CD8-positive, alpha-beta T cell (primary cell): ENCODE measurements at regions of chr4 and their contacts with region 1.

Region 1: GRCh38 chr4:7939377-7940108 is at the start of gene AFAP1:
- DNase-seq: peak; percentile 75 to 94 (median 87)
- ATAC-seq: peak; percentile 90
- H3K4me3 ChIP-seq: peak within 1 kb of the TSS; percentile 63 to 70
- H3K4me3 Mint-ChIP-seq: peak within 1 kb of the TSS; percentile 75
- H3K27ac ChIP-seq: peak within 1 kb of the TSS in 1 of 2 experiments; percentile 62
- H3K27ac Mint-ChIP-seq: no peak within 1 kb of the TSS
- H3K4me1 ChIP-seq: peaks cover 9% of the 10 kb centered on the region
- H3K4me1 Mint-ChIP-seq: peaks cover 26% of the 10 kb centered on the region
- H3K27me3 ChIP-seq: peaks cover 0 to 5% of the 10 kb centered on the region in 2 experiments
- H3K27me3 Mint-ChIP-seq: no peaks in the 10 kb centered on the region
- CTCF ChIP-seq: no peak
- total RNA-seq, gene AFAP1: 13.4 to 13.9 TPM

Region 2: GRCh38 chr4:7761720-7762119 is 177.8 kb before region 1 on chr4:
- CTCF ChIA-PET with region 1: interaction called, 3 read pairs
- POLR2A ChIA-PET with region 1: interaction called, 3 read pairs
- intact Hi-C with region 1: loop called in 1 of 2 experiments (anchors 2 kb)
- DNase-seq: peak; percentile 24 to 73 (median 55)
- ATAC-seq: peak; percentile 64
- H3K4me3 ChIP-seq: no peak overlapping the region
- H3K4me3 Mint-ChIP-seq: peak overlapping the region; percentile 8
- H3K27ac ChIP-seq: peak overlapping the region in 1 of 2 experiments; percentile 31
- H3K27ac Mint-ChIP-seq: peak overlapping the region; percentile 84
- H3K4me1 ChIP-seq: peaks cover 35% of the 10 kb centered on the region
- H3K4me1 Mint-ChIP-seq: peaks cover 32% of the 10 kb centered on the region
- H3K27me3 ChIP-seq: no peaks in the 10 kb centered on the region
- H3K27me3 Mint-ChIP-seq: no peaks in the 10 kb centered on the region
- CTCF ChIP-seq: peak; percentile 51

Region 3: DNA sequence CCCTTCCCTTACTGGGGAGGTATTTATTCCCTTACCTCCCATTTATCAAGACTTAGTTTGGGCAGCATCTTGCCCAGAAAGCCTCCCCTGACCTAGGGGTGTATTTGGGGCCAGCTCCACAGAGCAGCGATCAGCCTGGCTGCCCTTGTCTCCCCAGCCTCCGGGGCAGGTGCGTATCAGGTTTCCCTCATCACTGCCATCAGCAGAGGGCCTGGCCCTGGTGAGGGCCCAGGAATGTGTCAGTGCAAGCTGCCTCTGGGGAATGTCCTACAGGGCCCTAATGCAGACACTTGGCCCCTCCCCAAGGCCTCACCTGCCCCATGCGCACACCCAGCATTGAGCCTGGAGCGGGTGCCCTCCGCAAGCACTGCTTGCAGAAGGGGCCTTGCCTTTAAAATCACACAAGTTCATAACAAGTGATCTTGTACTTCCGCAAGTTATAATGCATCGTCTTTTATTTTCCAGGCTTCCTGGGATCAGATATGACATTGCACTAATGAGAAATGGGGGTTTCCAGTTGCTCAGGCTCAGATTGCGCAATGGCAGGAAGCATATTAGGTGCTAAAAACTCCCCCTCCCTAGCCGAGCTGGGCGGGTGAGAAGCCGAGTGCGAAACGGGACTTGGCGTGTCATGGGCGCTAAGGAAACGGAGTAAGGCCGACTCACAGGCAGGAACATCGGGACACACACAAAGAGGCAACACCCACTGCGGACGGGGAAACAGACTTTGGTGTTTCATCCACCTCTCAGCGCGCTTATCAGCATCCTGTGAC is 25.5 kb after region 1 on chr4:
- CTCF ChIA-PET with region 1: no interaction called
- POLR2A ChIA-PET with region 1: no interaction called
- intact Hi-C with region 1: loop called (anchors 1 to 5 kb)
- DNase-seq: peak in 5 of 9 experiments; percentile 26 to 93 (median 52)
- ATAC-seq: peak; percentile 41
- H3K4me3 ChIP-seq: no peak overlapping the region
- H3K4me3 Mint-ChIP-seq: no peak overlapping the region
- H3K27ac ChIP-seq: peak overlapping the region; percentile 37 to 95
- H3K27ac Mint-ChIP-seq: peak overlapping the region; percentile 82
- H3K4me1 ChIP-seq: peaks cover 44% of the 10 kb centered on the region
- H3K4me1 Mint-ChIP-seq: peaks cover 36% of the 10 kb centered on the region
- H3K27me3 ChIP-seq: no peaks in the 10 kb centered on the region
- H3K27me3 Mint-ChIP-seq: peaks cover 2% of the 10 kb centered on the region
- CTCF ChIP-seq: no peak

Region 4: DNA sequence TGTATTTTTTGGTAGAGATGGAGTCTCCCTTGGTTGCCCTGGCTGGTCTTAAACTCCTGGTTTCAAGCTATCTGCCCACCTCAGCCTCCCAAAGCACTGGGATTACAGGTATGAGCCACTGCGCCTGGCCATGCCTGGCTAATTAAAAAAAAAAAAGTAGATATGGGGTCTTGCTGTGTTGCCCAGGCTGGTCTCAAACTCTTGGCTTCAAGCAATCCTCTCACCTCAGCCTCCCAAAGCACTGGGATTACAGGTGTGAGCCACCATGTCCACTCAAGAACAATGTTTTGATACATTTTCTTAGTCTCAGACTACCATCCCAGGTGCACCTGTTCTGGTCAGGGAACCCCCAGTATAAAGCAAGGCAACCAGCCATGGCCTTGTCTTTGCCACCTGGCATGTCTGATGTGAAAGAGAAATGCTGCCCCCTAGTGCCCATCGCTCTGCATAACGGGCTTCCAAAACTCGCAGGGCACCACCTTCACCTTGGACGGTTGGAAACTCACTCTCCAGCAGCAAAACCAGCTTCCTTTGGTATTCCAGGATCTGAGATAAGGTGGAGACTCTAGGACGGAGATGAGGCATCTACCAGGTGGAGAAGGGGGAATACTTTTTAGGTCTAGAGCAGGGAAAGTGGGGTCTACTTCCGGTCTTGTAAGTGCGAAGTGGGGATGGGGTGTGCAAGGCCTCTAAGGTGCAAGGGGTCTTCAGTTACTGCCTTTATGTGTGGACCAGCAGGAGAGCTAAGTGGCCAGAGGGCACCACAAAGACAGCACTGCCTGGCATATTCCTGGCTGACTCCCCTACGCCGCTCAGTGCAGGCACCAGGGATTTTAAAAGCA is 47.8 kb after region 1 on chr4:
- CTCF ChIA-PET with region 1: interaction called, 8 read pairs
- POLR2A ChIA-PET with region 1: interaction called, 3 read pairs
- intact Hi-C with region 1: loop called (anchors 1 to 5 kb)
- DNase-seq: peak; percentile 56 to 84 (median 76)
- ATAC-seq: peak; percentile 77
- H3K4me3 ChIP-seq: no peak overlapping the region
- H3K4me3 Mint-ChIP-seq: no peak overlapping the region
- H3K27ac ChIP-seq: no peak overlapping the region
- H3K27ac Mint-ChIP-seq: no peak overlapping the region
- H3K4me1 ChIP-seq: peaks cover 5% of the 10 kb centered on the region
- H3K4me1 Mint-ChIP-seq: peaks cover 6% of the 10 kb centered on the region
- H3K27me3 ChIP-seq: no peaks in the 10 kb centered on the region
- H3K27me3 Mint-ChIP-seq: peaks cover 2% of the 10 kb centered on the region
- CTCF ChIP-seq: peak; percentile 76

Region 5: DNA sequence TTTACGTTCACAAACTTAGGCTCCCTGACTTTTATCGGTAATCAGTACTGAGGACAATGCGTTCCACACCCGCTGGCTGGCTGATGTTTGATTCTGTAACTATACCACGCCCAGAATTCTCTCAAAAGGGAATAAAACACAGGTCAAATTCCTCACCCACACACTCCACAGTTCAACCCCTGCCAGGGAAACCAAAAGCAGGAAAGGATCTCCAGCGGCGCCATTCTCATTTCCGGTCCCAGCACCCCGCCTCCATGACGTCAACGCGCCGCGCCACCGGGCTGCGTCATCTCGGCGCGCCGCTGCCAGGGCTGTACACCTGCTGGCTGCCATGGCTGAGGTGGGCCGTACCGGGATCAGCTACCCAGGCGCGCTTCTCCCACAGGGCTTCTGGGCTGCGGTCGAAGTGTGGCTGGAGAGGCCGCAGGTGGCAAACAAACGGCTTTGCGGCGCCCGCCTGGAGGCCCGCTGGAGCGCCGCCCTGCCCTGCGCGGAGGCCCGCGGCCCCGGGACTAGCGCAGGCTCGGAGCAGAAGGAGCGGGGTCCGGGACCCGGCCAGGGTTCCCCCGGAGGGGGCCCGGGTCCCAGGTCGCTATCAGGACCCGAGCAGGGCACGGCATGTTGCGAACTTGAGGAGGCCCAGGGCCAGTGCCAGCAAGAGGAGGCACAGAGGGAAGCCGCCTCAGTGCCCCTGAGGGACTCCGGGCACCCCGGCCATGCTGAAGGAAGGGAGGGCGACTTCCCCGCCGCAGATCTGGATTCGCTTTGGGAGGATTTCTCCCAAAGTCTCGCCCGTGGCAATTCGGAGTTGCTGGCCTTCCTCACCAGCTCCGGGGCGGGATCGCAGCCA is 501.2 kb after region 1 on chr4 and contains the starts of genes ACOX3 and TRMT44:
- CTCF ChIA-PET with region 1: no interaction called
- POLR2A ChIA-PET with region 1: no interaction called
- intact Hi-C with region 1: loop called in 1 of 2 experiments (anchors 5 kb)
- DNase-seq: peak; percentile 90 to 99 (median 95)
- ATAC-seq: peak; percentile 89
- H3K4me3 ChIP-seq: peak within 1 kb of the TSS; percentile 86 to 98
- H3K4me3 Mint-ChIP-seq: peak within 1 kb of the TSS; percentile 100
- H3K27ac ChIP-seq: peak within 1 kb of the TSS; percentile 98
- H3K27ac Mint-ChIP-seq: peak within 1 kb of the TSS; percentile 100
- H3K4me1 ChIP-seq: peaks cover 47% of the 10 kb centered on the region
- H3K4me1 Mint-ChIP-seq: peaks cover 79% of the 10 kb centered on the region
- H3K27me3 ChIP-seq: no peaks in the 10 kb centered on the region
- H3K27me3 Mint-ChIP-seq: no peaks in the 10 kb centered on the region
- CTCF ChIP-seq: no peak
- total RNA-seq, gene ACOX3: 5.3 to 5.8 TPM
- total RNA-seq, gene TRMT44: 34.9 to 44.2 TPM